ENCODE measurements at regions of chr2 and their contacts with region 1.

Region 1: DNA sequence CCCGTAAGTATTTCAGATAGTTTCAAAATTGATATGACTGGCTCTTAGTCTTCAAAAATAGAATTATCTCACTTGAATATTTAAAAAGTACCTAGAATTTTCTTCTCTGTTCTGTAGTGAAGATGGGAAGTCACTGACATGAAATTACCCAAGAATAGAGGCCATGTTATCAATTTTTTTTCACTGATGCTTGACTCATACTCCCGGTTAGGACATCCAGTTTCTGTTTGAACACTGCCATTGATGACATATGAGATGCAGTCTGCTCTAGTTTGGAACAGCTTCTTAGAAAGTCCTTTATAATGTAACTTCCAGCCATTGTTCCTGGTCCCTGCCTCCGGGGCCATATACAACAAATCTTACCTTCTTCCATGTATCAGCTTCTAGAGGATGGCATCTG is 26.0 kb downstream of the MAP3K20 start:
- DNase-seq: no peak
- H3K4me3 Mint-ChIP-seq: no peak overlapping the region
- H3K27ac Mint-ChIP-seq: peak overlapping the region; percentile 55
- H3K4me1 Mint-ChIP-seq: peaks cover 19% of the 10 kb centered on the region
- H3K27me3 Mint-ChIP-seq: no peaks in the 10 kb centered on the region

Region 2: GRCh38 chr2:173075781-173076580 is 25.7 kb before region 1 on chr2 and contains the start of gene MAP3K20:
- intact Hi-C with region 1: loop called (anchors 2 kb)
- DNase-seq: peak; percentile 90
- H3K4me3 Mint-ChIP-seq: peak within 1 kb of the TSS; percentile 83
- H3K27ac Mint-ChIP-seq: peak within 1 kb of the TSS; percentile 79
- H3K4me1 Mint-ChIP-seq: peaks cover 22% of the 10 kb centered on the region
- H3K27me3 Mint-ChIP-seq: peaks cover 30% of the 10 kb centered on the region
- total RNA-seq, gene MAP3K20: 17.9 and 19.1 TPM in 2 replicates

Measured in activated CD4-positive, alpha-beta T cell treated with anti-CD3 and anti-CD28 coated beads, Interleukin-2, amount 10 ng/mL, durations not matched to agents 24 days and 14 days (primary cell).